Heart left ventricle (tissue), 16 donors: ENCODE measurements at regions of chr5 and their contacts with region 1.

Region 1: GRCh38 chr5:7436506-7436905 is 40.6 kb downstream of the ADCY2 start:
- DNase-seq: no peak
- ATAC-seq: no peak
- H3K4me3 ChIP-seq: no peak overlapping the region
- H3K27ac ChIP-seq: no peak overlapping the region
- H3K4me1 ChIP-seq: peaks cover 0 to 3% (median 0%) of the 10 kb centered on the region in 12 donors
- H3K27me3 ChIP-seq: no peaks in the 10 kb centered on the region
- CTCF ChIP-seq: no peak
- POLR2A ChIP-seq: no peak

Region 2: GRCh38 chr5:7501055-7501454 is 64.5 kb after region 1 on chr5:
- intact Hi-C with region 1: loop called in 1 of 10 experiments (anchors 2 kb)
- DNase-seq: no peak
- ATAC-seq: no peak
- H3K4me3 ChIP-seq: no peak overlapping the region
- H3K27ac ChIP-seq: no peak overlapping the region
- H3K4me1 ChIP-seq: no peaks in the 10 kb centered on the region
- H3K27me3 ChIP-seq: peaks cover 0 to 4% (median 0%) of the 10 kb centered on the region in 9 donors
- CTCF ChIP-seq: no peak
- POLR2A ChIP-seq: no peak